ENCODE measurements at regions of chr3 and their contacts with region 1.

Region 1: DNA sequence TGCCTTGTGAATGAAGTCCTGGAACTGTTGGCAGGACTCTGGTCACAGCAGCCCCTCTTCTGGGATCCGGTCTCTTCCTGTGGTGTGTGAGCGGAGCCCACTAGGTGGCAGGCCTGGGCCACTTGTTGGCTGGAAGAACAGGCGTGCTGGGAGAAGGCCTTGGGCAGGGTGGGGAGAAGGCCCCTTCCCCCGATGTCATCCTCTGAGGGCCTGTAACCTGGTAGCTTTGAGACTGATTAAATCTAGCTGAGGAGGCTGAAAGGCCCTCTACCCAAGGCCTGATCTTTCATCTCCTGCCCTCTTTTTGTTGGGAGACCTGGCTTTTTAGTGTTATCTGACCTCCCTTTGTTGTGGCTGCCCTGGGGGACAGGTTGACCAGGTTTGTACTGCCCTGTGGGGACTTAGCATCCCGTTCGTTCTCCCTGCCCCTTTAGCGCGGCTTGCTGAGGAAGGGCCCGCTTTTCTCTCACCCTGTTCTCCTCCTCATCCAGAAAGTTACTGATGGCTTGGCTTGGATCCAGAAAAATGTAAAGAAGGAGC is 48.3 kb downstream of the CHCHD6 start:
- DNase-seq: peak; percentile 55
- H3K4me3 Mint-ChIP-seq: no peak overlapping the region
- H3K27ac Mint-ChIP-seq: no peak overlapping the region
- H3K4me1 Mint-ChIP-seq: peaks cover 7% of the 10 kb centered on the region
- H3K27me3 Mint-ChIP-seq: no peaks in the 10 kb centered on the region

Region 2: GRCh38 chr3:126982471-126983175 is 230.2 kb after region 1 on chr3 and contains the start of gene PLXNA1:
- CTCF ChIA-PET with region 1: interaction called, 10 read pairs
- POLR2A ChIA-PET with region 1: no interaction called
- DNase-seq: peak; percentile 85
- H3K4me3 Mint-ChIP-seq: peak within 1 kb of the TSS; percentile 75
- H3K27ac Mint-ChIP-seq: peak within 1 kb of the TSS; percentile 83
- H3K4me1 Mint-ChIP-seq: peaks cover 19% of the 10 kb centered on the region
- H3K27me3 Mint-ChIP-seq: peaks cover 13% of the 10 kb centered on the region
- total RNA-seq, gene PLXNA1: 3.8 to 3.9 TPM